HepG2 (cell line): ENCODE measurements at regions of chr17 and their contacts with region 1.

Region 1: DNA sequence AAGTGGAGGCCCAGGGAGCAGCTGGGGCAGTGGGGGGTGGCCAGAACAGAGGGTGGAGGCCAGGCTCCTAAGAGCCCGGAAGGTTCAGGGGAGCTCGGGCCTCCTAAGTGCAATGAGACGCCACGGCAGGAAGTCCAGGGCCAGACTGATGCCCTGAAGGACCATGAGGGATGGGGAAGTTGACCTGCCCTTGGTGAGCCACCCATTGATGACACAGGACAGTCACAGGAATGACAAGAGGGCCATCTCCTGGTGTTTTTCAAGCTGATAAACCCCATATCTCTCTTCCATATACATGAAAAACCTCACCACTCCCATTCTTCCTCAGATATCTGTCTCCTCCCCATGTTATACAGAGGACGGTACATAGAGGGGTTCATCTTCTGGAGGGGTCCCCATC is 5.8 kb upstream of the MRPL58 start:
- DNase-seq: peak; percentile 69
- ATAC-seq: peak; percentile 70
- H3K4me3 ChIP-seq: no peak overlapping the region
- H3K27ac ChIP-seq: no peak overlapping the region
- H3K4me1 ChIP-seq: peaks cover 12% of the 10 kb centered on the region
- H3K27me3 ChIP-seq: no peaks in the 10 kb centered on the region; a peak in 1 of 5 replicates
- CTCF ChIP-seq: peak; percentile 83
- EP300 ChIP-seq: no peak
- POLR2A ChIP-seq: no peak
- RAD21 ChIP-seq: peak; percentile 84

Region 2: DNA sequence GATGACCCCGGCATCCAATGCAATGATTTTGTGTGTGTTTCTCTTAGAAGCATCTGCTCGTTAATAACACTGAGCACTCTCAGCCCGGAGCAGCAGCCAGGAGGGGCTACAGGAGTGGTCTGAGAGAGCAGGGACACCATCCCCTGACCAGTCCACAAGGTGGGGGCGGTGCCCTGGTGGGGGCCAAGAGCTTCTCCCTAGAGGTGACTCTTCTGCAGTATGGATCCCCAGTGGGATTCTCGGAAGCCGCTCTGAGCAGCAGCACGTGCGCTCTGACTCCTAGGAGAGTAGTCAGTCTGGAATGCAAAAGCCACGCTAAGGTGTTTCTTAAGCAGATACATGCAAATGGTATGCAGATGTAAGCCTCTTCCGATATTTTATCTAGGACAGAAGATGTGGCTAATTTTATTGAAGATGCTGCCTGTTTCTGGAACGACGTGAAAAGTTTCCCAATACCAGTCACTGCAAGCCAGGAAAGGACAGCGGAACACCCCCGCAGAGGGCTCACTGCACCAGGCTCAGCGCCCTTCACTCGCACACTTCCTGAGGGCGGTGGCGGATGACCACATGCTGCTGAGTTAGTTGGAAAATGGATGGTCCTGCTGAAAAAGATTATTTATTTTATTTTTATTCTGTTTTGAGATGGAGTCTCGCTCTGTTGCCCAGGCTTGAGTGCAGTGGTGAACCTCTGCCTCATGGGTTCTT is 123.5 kb before region 1 on chr17:
- CTCF ChIA-PET with region 1: no interaction called
- POLR2A ChIA-PET with region 1: no interaction called
- in situ Hi-C with region 1: no loop called
- intact Hi-C with region 1: no loop called
- DNase-seq: no peak
- ATAC-seq: no peak
- H3K4me3 ChIP-seq: no peak overlapping the region
- H3K27ac ChIP-seq: no peak overlapping the region
- H3K4me1 ChIP-seq: peaks cover 7% of the 10 kb centered on the region
- H3K27me3 ChIP-seq: peaks cover 15 to 69% of the 10 kb centered on the region in 2 experiments; a peak in 4 of 5 replicates
- CTCF ChIP-seq: no peak
- EP300 ChIP-seq: no peak
- POLR2A ChIP-seq: no peak
- RAD21 ChIP-seq: no peak

Region 3: GRCh38 chr17:74923533-74924249 is 83.0 kb before region 1 on chr17:
- CTCF ChIA-PET with region 1: no interaction called
- POLR2A ChIA-PET with region 1: no interaction called
- in situ Hi-C with region 1: loop called (anchors 5 kb)
- intact Hi-C with region 1: no loop called
- DNase-seq: no peak
- ATAC-seq: peak; percentile 63
- H3K4me3 ChIP-seq: peak overlapping the region; percentile 30 to 53 (median 35); a peak in 4 of 6 replicates
- H3K27ac ChIP-seq: no peak overlapping the region
- H3K4me1 ChIP-seq: peaks cover 23% of the 10 kb centered on the region
- H3K27me3 ChIP-seq: peaks cover 23 to 79% of the 10 kb centered on the region in 2 experiments
- CTCF ChIP-seq: peak; percentile 91
- EP300 ChIP-seq: no peak
- POLR2A ChIP-seq: no peak
- RAD21 ChIP-seq: peak; percentile 89